ENCODE measurements at regions of chr16 and their contacts with region 1.

Region 1: DNA sequence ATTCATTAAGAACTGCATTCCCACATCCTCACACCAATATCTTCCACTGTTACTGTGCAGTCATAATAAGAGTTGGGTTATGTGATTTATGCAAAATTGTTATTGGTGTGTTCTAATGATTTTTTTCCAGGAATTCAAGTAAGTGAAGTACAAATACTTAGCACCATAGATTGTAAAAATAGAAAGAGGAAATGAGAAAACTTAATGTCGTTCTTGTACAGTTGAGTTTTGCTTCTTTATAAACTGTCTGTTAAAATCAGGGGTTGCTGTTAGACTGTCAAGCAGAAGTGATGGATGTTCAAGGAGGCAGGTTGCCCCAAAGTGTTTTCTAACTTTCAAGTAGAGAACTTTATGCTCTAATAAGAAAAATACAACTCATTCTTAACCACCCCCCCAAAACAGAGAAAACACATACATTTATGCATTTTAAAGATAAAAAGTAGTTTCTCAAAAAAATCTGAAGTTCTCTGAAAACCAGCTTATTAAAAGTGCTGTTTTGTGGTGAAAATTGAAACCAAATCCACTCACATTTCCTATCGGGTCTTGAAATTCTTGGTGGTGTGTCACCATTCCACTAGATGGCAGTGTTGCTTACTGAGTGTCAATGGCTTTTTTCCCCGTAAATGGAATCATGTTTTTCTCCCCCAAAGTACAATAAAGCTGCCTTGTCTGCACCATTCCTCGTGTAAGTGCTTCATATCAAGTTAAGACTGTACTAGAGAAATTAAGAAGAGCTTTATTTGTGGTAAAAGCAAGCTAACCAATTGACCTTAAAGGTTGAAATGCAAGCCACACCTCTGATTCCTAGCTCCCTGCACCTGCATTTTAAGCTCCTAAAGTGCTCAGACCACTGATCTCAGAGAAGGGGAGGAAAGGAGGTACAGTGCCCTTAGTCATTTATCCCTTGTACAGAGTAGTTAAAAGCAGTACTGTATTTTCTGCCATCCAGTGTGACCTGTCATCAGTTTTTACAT is 4.7 kb upstream of the IGSF6 start:
- DNase-seq: peak in 1 of 4 donors; percentile 39
- ATAC-seq: peak; percentile 70
- H3K4me3 ChIP-seq: no peak overlapping the region
- H3K27ac ChIP-seq: no peak overlapping the region
- H3K4me1 ChIP-seq: peaks cover 0 to 54% of the 10 kb centered on the region in 2 donors
- H3K27me3 ChIP-seq: no peaks in the 10 kb centered on the region
- CTCF ChIP-seq: peak; percentile 76 to 83

Region 2: DNA sequence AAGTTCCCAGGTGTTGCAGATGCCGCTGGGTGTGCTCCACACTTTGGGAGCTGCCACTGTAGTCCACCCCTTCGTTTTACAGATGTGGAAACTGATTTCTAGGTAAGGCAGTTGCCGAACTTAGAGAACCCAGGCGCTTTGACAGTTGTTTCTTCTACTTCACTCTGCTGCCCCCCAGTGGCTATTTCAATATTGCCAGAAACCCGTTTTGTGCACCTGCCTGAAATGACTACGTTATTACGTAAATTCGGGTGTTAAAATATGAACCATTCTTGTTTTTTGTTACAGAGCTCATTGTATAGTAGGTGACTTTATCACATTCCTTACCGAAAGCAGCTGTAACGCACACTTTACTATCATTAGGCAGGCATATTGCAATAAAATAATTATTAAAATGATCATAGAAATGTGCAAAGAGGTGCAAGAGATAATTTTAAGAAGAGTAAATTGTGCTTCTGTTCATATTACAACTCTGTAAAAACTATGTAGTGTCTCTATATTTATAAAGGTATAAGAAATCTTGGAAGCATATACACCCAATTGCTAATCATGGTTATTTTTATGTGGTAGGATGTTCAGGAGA is 51.5 kb after region 1 on chr16:
- intact Hi-C with region 1: loop called in 1 of 2 experiments (anchors 10 kb)
- DNase-seq: peak in 3 of 4 donors; percentile 33 to 62 (median 61)
- ATAC-seq: peak; percentile 92
- H3K4me3 ChIP-seq: no peak overlapping the region
- H3K27ac ChIP-seq: no peak overlapping the region
- H3K4me1 ChIP-seq: peaks cover 0 to 8% of the 10 kb centered on the region in 2 donors
- H3K27me3 ChIP-seq: no peaks in the 10 kb centered on the region
- CTCF ChIP-seq: peak; percentile 71 to 85

Region 3: DNA sequence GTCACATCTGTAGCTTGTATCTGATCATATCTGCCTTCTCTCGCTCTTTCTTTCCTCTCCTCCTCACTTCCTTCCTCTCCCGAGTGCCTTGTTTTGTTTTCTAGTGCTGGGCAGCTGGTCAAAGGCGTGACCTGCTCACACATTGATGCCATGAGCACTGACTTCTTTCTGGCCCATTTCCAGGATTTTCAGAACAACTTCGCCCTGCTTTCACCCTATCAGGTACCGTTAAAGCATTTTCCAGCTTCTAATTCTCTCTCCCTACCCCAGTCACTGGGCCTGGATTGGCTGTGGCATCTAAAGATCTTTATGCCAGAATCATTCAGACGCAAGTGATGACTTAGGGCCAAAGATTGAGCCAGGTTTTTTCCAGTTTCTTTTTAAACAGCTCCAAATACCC is 62.2 kb after region 1 on chr16:
- intact Hi-C with region 1: no loop called
- DNase-seq: no peak
- ATAC-seq: no peak
- H3K4me3 ChIP-seq: no peak overlapping the region
- H3K27ac ChIP-seq: no peak overlapping the region
- H3K4me1 ChIP-seq: no peaks in the 10 kb centered on the region
- H3K27me3 ChIP-seq: no peaks in the 10 kb centered on the region
- CTCF ChIP-seq: no peak

Measured in left lung (tissue), 14 donors.